ENCODE measurements at regions of chrX and their contacts with region 1.

Region 1: GRCh38 chrX:149871940-149872339 is 9.0 kb upstream of the MAGEA8 start:
- DNase-seq: no peak
- ATAC-seq: peak; percentile 32; the same call in 1 of the 2 replicates
- H3K4me3 ChIP-seq: no peak overlapping the region
- H3K27ac ChIP-seq: no peak overlapping the region
- H3K4me1 ChIP-seq: no peaks in the 10 kb centered on the region
- H3K27me3 ChIP-seq: no peaks in the 10 kb centered on the region; the same call in 1 of the 2 replicates
- CTCF ChIP-seq: peak; percentile 19; the same call in 1 of the 2 replicates
- POLR2A ChIP-seq: no peak
- RAD21 ChIP-seq: no peak

Region 2: DNA sequence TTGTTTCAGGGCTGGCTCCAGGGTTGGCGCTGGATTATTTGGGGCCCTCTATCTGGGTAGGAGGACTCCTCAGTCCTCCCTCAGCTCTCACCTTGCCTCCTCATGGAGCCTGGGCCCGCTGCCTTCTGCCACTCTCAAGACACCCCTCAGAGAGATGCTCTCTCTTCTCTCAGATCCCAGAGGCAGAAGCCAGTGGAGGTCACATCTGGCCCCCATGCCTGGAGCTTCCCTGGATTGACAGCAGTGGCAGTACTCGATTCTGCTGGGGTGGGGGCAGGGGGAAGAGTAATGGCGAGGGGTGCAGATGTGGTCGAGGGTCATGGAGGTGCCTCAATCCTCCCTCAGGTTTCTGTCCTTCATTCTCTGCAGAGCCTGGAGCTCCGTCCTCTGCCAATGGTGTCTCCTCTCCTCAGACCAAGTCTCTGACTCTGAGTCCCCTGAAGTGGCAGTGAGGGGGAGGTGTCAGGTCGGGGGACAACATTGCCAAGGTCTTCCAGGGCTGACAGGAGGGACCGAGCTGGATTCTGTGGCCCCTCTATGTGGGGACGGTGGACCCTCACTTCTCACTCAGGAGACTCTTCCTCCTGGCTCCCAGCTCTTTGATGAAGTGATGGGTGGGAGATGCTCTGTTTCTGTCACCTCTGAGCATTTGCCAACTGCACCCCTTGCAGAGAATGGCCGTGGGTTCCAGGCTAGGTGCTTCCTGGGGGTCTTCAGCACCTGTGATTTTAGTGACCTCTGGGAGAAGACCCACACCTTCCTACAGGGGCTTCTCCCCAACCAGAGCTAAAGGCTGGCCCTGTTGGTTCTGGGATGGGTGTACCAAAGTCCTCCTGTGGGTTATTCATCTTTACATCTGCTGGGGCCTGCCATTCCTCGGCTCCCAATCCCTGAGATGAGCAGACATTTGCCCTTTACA is 109.0 kb before region 1 on chrX:
- CTCF ChIA-PET with region 1: no interaction called
- POLR2A ChIA-PET with region 1: no interaction called
- dilution Hi-C with region 1: no loop called
- in situ Hi-C with region 1: loop called (anchors 25 kb)
- intact Hi-C with region 1: no loop called
- DNase-seq: no peak
- ATAC-seq: no peak
- H3K4me3 ChIP-seq: no peak overlapping the region
- H3K27ac ChIP-seq: no peak overlapping the region
- H3K4me1 ChIP-seq: no peaks in the 10 kb centered on the region
- H3K27me3 ChIP-seq: no peaks in the 10 kb centered on the region
- CTCF ChIP-seq: no peak
- POLR2A ChIP-seq: no peak
- RAD21 ChIP-seq: no peak

Region 3: DNA sequence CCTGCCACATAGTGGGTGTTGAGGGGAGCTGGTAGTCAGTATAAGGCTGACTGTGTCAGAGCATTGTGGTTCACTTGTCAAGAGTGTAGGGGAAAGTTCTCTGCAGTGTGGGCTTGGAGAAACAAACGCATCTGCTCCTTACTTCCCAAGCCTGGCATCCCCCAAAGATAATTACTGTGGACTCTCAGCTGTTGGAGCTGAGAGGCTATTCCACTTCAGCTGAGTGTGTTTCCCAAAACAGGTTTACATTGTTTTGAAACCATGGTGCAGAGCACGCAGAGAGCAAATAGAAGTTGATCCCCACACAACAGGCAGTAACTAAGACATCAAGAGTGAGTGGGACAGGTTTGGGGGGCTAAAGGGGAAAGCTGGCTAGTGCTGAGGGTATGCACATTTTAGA is 247.4 kb after region 1 on chrX:
- CTCF ChIA-PET with region 1: no interaction called
- POLR2A ChIA-PET with region 1: no interaction called
- dilution Hi-C with region 1: no loop called
- in situ Hi-C with region 1: no loop called
- intact Hi-C with region 1: no loop called
- DNase-seq: no peak
- ATAC-seq: no peak
- H3K4me3 ChIP-seq: no peak overlapping the region
- H3K27ac ChIP-seq: no peak overlapping the region
- H3K4me1 ChIP-seq: no peaks in the 10 kb centered on the region
- H3K27me3 ChIP-seq: no peaks in the 10 kb centered on the region
- CTCF ChIP-seq: no peak
- POLR2A ChIP-seq: no peak
- RAD21 ChIP-seq: no peak

Measured in IMR-90 (cell line).